AG04450 (cell line): ENCODE measurements at regions of chr3 and their contacts with region 1.

Region 1: GRCh38 chr3:48472915-48473616 is 26.5 kb downstream of the ATRIP start:
- DNase-seq: peak; percentile 75
- H3K4me3 ChIP-seq: peak overlapping the region; percentile 93
- H3K27ac ChIP-seq: peak overlapping the region; percentile 97
- H3K27me3 ChIP-seq: no peaks in the 10 kb centered on the region
- CTCF ChIP-seq: peak; percentile 40

Region 2: GRCh38 chr3:48064292-48064829 is 408.7 kb before region 1 on chr3:
- CTCF ChIA-PET with region 1: no interaction called
- POLR2A ChIA-PET with region 1: no interaction called
- DNase-seq: no peak
- H3K4me3 ChIP-seq: no peak overlapping the region
- H3K27ac ChIP-seq: no peak overlapping the region
- H3K27me3 ChIP-seq: no peaks in the 10 kb centered on the region
- CTCF ChIP-seq: no peak

Region 3: DNA sequence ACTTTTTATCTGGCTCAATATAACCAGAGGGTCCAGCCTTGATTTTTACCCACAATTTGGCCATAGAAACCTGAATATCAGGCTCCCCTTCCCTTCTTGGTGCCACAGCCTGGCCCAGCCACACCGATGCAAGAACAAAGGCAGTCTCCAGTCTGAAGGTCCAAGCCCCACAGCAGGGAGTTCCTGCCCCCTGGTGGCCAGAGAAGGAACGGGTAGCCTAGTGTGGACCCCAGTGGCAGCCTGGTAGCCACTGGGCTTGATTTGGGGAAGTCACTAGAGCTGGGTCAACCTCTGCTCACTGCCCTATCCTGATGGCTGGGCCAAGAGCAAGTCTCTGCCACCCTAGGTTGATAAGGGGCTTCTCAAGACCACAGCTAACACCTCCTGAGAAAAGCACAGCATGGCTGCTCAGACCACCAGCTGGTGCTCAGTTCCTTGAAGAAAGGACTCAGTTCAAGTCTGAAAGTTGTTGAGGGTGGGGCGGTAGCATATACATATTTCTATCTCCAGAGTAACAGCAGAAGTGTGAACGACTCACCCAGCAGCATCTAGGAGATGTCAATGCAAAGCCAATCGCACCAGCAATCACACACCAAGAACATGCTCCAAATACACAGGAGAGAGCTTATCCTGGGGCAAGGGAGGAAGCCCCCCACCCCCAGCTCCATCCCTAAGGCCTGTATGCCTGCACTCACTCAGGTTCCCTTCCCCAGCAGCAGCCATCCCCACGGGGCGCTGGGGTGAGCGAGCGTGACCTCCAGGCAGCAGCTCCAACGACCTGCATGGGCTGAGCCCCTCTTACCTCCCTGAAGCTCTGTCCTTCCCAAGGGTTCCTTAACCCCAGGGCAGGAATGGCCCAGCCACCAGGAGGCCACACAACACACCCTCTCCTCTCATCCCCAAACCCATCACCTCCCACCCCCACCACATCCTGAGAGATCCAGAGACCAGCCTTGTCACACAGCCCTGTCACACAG is 76.0 kb after region 1 on chr3:
- CTCF ChIA-PET with region 1: interaction called, 11 read pairs
- POLR2A ChIA-PET with region 1: interaction called, 3 read pairs
- DNase-seq: no peak
- H3K4me3 ChIP-seq: no peak overlapping the region
- H3K27ac ChIP-seq: no peak overlapping the region
- H3K27me3 ChIP-seq: no peaks in the 10 kb centered on the region
- CTCF ChIP-seq: peak; percentile 97